ENCODE measurements at regions of chr6 and their contacts with region 1.

Region 1: GRCh38 chr6:21754891-21755290 is 161.3 kb downstream of the SOX4 start:
- DNase-seq: peak; percentile 92
- H3K4me3 ChIP-seq: no peak overlapping the region
- H3K27ac ChIP-seq: peak overlapping the region; percentile 67
- H3K4me1 ChIP-seq: peaks cover 37% of the 10 kb centered on the region
- H3K27me3 ChIP-seq: no peaks in the 10 kb centered on the region
- CTCF ChIP-seq: no peak

Region 2: DNA sequence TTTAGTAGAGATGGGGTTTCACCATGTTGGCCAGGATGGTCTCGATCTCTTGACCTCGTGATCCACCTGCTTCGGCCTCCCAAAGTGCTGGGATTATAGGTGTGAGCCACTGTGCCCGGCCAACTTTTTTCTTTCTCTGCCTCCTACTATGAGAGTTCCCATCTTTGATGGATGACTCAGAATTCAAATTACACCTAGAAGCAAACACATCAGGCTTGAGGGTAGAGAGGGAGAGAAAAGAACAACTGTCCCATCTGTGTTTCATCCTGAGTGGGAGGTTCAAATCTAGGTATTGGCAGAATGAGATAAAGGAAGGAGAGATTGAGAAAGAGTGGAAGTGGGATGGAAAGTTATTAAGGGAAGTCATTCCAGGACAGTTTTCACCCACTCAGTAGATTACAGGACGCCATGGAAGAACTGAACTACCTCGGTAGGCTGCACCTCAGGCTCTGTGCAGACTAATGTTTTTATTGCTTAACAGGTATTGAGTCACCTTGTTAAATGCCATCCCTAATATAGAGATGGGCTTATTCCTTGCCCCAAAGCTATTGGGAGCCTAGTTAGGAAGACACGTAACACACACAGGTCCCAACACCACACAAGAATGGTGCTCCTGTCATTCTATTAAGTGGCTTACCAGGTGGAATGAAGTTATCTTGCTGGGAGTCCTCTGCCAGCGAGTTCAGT is 114.3 kb after region 1 on chr6:
- CTCF ChIA-PET with region 1: no interaction called
- dilution Hi-C with region 1: no loop called
- in situ Hi-C with region 1: no loop called
- intact Hi-C with region 1: loop called (anchors 5 kb)
- DNase-seq: peak; percentile 97
- H3K4me3 ChIP-seq: no peak overlapping the region
- H3K27ac ChIP-seq: peak overlapping the region; percentile 62
- H3K4me1 ChIP-seq: peaks cover 28% of the 10 kb centered on the region
- H3K27me3 ChIP-seq: no peaks in the 10 kb centered on the region
- CTCF ChIP-seq: no peak

Measured in mammary epithelial cell (primary cell).